Heart right ventricle (tissue), 16 donors: ENCODE measurements at regions of chr9 and their contacts with region 1.

Region 1: GRCh38 chr9:20604562-20604961 is 17.7 kb downstream of the MLLT3 start:
- DNase-seq: no peak
- ATAC-seq: peak in 5 of 8 donors; percentile 51 to 67 (median 63)
- H3K4me3 ChIP-seq: peak overlapping the region in 7 of 10 donors; percentile 7 to 40 (median 29)
- H3K27ac ChIP-seq: peak overlapping the region in 8 of 10 donors; percentile 5 to 72 (median 31)
- H3K4me1 ChIP-seq: peaks cover 2 to 56% (median 46%) of the 10 kb centered on the region in 9 donors
- H3K27me3 ChIP-seq: no peaks in the 10 kb centered on the region
- CTCF ChIP-seq: no peak

Region 2: DNA sequence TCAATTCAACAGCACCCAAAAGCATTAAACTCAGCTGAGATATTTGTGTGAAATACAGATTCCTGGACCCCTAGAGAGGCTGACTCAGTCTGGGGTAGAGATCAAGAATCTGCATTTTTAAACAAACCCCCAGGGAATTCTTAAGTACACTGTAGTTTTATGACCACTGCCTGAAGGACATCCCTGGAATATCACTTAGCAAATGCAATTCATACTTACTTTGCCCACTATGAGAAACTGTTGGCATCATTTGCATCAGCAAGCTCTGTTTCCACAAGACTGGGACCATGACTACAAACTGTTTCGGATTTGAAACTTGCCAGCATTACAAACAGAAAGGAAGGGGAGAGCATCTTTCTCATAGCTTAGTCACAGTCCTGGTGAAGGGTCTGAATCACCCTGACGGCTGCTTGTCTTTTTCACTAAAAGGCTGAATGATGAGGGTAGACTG is 46.0 kb before region 1 on chr9:
- intact Hi-C with region 1: loop called in 1 of 10 experiments (anchors 5 kb)
- DNase-seq: no peak
- ATAC-seq: peak in 3 of 8 donors; percentile 26 to 44 (median 33)
- H3K4me3 ChIP-seq: no peak overlapping the region
- H3K27ac ChIP-seq: no peak overlapping the region
- H3K4me1 ChIP-seq: peaks cover 3 to 59% (median 25%) of the 10 kb centered on the region in 9 donors
- H3K27me3 ChIP-seq: no peaks in the 10 kb centered on the region
- CTCF ChIP-seq: no peak

Region 3: DNA sequence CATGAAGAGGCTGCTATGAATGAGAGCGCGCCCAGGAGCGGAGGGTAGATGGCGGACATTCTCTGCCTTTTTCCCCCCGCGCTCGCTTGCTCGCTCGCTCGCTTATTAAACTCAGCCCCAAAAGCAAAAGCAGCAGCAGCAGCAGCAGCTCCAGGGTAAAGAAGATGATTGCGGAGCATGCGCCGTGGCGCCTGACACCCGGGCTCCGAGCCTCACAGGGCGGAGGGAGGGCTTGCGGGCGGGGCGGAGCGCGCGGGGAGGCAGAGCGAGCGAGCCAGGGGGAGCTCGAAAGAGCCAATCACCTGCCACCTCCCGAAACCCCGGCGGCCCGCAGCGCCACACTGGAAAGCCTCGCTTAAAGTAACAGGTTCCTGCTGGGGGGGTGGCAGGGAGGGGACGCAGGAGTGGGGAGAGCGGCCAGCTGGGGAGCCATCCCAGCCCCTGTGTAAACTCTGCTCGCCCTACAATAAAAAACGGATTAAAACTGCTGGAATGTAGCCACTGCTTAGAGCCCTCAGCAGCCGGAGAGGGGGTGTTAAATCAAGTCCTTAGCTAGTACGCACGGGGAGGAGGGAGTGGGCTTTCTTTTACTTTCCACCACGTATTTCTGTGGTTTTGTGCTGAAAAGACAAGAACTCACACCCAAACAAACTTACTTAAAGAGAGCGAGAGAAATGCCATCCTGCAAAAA is 17.9 kb after region 1 on chr9 and contains the start of gene MLLT3:
- intact Hi-C with region 1: no loop called
- DNase-seq: peak; percentile 96 to 98
- ATAC-seq: peak; percentile 93 to 99 (median 96)
- H3K4me3 ChIP-seq: peak within 1 kb of the TSS; percentile 66 to 94 (median 88)
- H3K27ac ChIP-seq: peak within 1 kb of the TSS; percentile 82 to 92 (median 85)
- H3K4me1 ChIP-seq: peaks cover 0 to 40% (median 33%) of the 10 kb centered on the region in 9 donors
- H3K27me3 ChIP-seq: peaks cover 0 to 7% (median 0%) of the 10 kb centered on the region in 7 donors
- CTCF ChIP-seq: peak in 5 of 9 donors; percentile 7 to 42 (median 35)
- total RNA-seq, gene MLLT3: 6.3 to 22.7 (median 14.7) TPM

Region 4: DNA sequence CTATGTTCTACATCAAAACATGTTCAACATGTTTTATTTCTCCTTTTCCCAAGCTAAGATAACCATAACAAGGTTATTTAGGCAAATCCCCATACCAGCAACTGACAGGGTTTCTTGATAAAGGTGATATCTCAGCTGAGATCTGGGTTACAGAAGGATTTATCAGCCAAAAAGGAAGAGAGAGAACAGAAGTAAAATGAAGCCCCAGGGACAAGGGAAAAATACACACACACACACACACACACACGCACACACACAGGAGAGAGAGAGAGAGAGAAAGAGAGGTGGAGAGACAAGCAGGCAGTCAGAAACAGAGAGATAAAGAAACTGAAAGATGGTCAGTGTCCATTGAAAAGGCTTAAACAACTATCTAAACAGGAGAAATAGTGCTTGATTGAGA is 37.5 kb after region 1 on chr9:
- intact Hi-C with region 1: loop called in 1 of 10 experiments (anchors 1 kb)
- DNase-seq: no peak
- ATAC-seq: no peak
- H3K4me3 ChIP-seq: no peak overlapping the region
- H3K27ac ChIP-seq: no peak overlapping the region
- H3K4me1 ChIP-seq: peaks cover 0 to 4% (median 0%) of the 10 kb centered on the region in 9 donors
- H3K27me3 ChIP-seq: no peaks in the 10 kb centered on the region
- CTCF ChIP-seq: no peak